ENCODE measurements at regions of chr16 and their contacts with region 1.

Region 1: GRCh38 chr16:2251483-2252240 is at the start of gene ECI1:
- DNase-seq: peak; percentile 99
- H3K4me3 Mint-ChIP-seq: peak within 1 kb of the TSS; percentile 88
- H3K27ac Mint-ChIP-seq: peak within 1 kb of the TSS; percentile 91
- H3K4me1 Mint-ChIP-seq: peaks cover 20% of the 10 kb centered on the region
- H3K27me3 Mint-ChIP-seq: no peaks in the 10 kb centered on the region
- CTCF ChIP-seq: peak; percentile 73
- total RNA-seq, gene ECI1: 85.7 and 87.5 TPM in 2 replicates

Region 2: GRCh38 chr16:2194852-2195321 is 56.8 kb before region 1 on chr16:
- CTCF ChIA-PET with region 1: interaction called, 27 read pairs
- intact Hi-C with region 1: no loop called
- DNase-seq: peak; percentile 77
- H3K4me3 Mint-ChIP-seq: peak overlapping the region; percentile 58
- H3K27ac Mint-ChIP-seq: no peak overlapping the region
- H3K4me1 Mint-ChIP-seq: peaks cover 10% of the 10 kb centered on the region
- H3K27me3 Mint-ChIP-seq: peaks cover 85% of the 10 kb centered on the region
- CTCF ChIP-seq: peak; percentile 76

Region 3: GRCh38 chr16:2213817-2214720 is 37.6 kb before region 1 on chr16:
- CTCF ChIA-PET with region 1: interaction called, 15 read pairs
- intact Hi-C with region 1: no loop called
- DNase-seq: no peak
- H3K4me3 Mint-ChIP-seq: peak overlapping the region; percentile 78
- H3K27ac Mint-ChIP-seq: peak overlapping the region; percentile 72
- H3K4me1 Mint-ChIP-seq: peaks cover 22% of the 10 kb centered on the region
- H3K27me3 Mint-ChIP-seq: no peaks in the 10 kb centered on the region
- CTCF ChIP-seq: no peak

Region 4: DNA sequence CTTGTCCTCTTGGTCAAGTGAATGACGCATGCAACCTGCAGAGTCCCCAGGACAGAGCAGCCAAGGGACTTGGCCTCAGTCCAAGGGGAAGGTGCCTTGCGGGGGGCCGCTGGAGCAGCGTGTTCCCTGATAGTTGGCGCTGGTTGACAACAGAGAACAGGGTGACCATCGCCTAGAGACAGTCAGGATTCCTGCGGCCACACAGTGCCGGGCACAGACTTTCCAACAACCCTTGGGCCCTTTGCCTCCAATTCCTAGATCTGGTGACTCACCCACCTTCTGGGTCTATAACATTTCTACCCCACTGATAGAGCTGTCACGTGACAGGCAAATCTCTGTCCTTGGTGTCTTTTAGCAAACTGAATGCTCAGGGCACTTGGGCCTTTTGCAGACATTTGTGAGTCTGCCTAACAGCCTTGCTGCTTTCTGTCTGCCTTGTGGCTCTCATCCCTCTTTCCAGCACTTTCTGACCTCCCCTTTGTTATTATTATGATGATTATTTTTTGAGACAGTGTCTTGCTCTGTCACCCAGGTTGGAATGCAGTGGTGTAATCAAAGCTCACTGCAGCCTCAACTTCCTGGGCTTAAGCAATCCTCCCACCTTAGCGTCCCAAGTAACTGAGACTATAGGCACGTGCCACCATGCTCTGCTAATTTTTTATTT is 196.4 kb after region 1 on chr16:
- CTCF ChIA-PET with region 1: no interaction called
- intact Hi-C with region 1: no loop called
- DNase-seq: no peak
- H3K4me3 Mint-ChIP-seq: no peak overlapping the region
- H3K27ac Mint-ChIP-seq: no peak overlapping the region
- H3K4me1 Mint-ChIP-seq: no peaks in the 10 kb centered on the region
- H3K27me3 Mint-ChIP-seq: no peaks in the 10 kb centered on the region
- CTCF ChIP-seq: no peak

Measured in Calu3 (cell line).